ENCODE measurements at regions of chr19 and their contacts with region 1.

Region 1: DNA sequence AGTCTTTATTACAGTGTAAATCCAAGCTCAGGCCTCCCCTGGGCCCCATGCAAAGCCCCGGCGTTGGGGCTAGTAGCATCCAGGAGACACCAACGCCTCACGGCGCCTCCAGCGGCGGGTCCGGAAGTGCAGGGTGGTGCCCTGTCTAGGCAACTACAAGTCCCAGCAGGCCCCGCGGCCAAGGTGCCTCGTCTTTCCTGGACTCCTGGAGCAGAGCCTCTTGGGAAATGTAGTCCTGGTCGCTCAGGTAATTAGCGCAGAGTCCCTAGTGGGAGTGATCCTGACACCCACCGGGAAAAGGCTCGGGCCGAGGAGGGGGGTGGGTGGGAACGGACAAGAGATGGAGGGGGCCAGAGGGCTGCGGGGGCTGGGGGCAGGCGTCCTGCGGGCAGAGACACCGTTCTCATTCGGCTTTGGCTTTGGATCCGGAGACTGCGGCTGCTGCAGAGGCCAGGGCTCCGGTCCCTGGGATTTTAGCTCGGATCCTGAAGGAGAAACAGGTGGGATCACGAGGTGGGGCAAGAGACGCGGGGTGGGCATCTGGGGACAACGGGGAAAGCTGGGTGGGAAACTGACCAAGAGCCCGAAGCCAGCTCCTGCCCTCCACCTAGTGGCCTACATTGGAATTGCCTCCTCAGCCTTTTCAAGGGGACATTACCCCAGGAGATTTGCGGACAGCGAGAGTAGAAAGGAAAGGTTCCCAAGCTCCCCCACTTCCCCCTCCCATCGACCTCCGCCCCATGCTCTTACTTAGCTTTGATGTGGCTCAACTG is 11.4 kb downstream of the RTN2 start:
- DNase-seq: peak; percentile 88

Region 2: DNA sequence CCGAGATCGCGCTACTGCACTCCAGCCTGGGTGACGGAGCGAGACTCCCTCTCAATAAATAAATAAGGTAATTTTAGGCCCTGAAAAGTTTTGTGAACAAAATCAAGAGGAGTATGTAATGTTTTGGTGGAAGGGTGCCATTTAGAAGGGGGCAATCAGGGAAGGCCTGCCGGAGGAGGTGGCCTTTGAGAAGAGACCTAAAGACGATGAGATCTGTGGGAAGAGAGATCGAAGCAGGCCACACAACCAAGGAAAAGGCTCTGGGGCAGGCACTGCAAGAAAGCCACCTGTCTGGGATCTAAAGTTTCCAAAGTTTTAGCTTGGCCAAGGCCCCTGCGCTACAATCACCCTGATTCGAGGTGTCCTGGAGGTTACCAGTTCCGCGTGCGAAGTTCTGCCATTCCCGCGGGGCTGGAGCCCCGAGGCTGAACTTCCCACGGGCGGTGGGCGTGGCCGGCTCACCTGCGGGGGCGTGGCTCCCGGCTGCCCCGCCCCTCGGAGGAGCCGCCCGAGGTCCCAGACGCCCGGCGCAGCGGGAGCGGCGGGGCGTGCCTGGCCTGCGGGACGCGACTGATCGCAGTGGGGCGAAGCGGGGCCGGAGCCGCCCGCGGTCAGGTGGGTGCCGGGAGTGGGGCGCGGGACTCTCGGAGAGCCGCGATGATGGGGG is 145.1 kb before region 1 on chr19 and contains the start of gene KLC3:
- CTCF ChIA-PET with region 1: no interaction called
- POLR2A ChIA-PET with region 1: no interaction called
- DNase-seq: peak; percentile 76

Region 3: GRCh38 chr19:45405435-45406225 is 79.9 kb before region 1 on chr19:
- CTCF ChIA-PET with region 1: interaction called, 10 read pairs
- POLR2A ChIA-PET with region 1: interaction called, 5 read pairs
- DNase-seq: peak; percentile 87

Region 4: DNA sequence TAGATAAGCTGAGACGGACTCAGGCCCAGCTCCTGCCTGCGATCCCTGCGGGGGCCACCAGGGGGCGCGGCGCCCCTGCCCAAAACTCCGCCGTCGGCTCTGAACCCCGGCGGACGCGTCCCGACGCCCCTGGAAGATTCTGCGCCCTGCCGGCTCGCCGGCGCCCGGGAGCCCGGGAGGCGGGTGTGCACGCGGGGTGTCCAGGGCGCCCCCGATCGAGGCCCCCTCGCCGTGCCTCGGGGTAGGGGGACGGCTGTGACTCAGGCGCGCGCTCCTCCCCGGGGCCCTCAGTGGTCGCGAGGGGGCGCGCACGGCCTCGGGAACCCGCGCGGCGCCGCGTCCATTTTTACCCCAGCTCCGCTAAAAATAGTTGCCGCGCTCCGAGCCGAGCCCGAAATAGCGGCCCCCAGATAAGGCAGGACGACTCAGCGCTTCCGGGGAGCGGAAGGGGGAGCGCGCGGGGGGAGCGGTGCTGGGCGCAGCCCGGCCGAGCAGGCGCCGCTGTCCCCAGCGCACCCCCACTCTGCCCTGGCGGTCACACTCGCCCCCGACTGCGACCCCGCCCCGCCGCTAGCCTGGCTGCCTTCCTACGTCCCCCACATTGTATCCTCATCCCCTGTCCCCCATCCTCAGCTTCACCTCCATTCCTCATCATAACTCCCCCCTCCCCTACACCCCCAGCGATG is 45.8 kb before region 1 on chr19:
- CTCF ChIA-PET with region 1: interaction called, 93 read pairs
- POLR2A ChIA-PET with region 1: interaction called, 6 read pairs
- DNase-seq: peak; percentile 73

Region 5: GRCh38 chr19:45469132-45469944 is 16.2 kb before region 1 on chr19:
- CTCF ChIA-PET with region 1: interaction called, 10 read pairs
- POLR2A ChIA-PET with region 1: interaction called, 5 read pairs
- DNase-seq: peak; percentile 89

Region 6: GRCh38 chr19:45496349-45496953 is 11.0 kb after region 1 on chr19:
- CTCF ChIA-PET with region 1: interaction called, 19 read pairs
- POLR2A ChIA-PET with region 1: interaction called, 3 read pairs
- DNase-seq: peak; percentile 28

Region 7: GRCh38 chr19:45643024-45643926 is 157.8 kb after region 1 on chr19:
- CTCF ChIA-PET with region 1: interaction called, 11 read pairs
- POLR2A ChIA-PET with region 1: no interaction called
- DNase-seq: peak; percentile 76

Measured in HEK293T (cell line).